ENCODE measurements at regions of chr5 and their contacts with region 1.

Region 1: DNA sequence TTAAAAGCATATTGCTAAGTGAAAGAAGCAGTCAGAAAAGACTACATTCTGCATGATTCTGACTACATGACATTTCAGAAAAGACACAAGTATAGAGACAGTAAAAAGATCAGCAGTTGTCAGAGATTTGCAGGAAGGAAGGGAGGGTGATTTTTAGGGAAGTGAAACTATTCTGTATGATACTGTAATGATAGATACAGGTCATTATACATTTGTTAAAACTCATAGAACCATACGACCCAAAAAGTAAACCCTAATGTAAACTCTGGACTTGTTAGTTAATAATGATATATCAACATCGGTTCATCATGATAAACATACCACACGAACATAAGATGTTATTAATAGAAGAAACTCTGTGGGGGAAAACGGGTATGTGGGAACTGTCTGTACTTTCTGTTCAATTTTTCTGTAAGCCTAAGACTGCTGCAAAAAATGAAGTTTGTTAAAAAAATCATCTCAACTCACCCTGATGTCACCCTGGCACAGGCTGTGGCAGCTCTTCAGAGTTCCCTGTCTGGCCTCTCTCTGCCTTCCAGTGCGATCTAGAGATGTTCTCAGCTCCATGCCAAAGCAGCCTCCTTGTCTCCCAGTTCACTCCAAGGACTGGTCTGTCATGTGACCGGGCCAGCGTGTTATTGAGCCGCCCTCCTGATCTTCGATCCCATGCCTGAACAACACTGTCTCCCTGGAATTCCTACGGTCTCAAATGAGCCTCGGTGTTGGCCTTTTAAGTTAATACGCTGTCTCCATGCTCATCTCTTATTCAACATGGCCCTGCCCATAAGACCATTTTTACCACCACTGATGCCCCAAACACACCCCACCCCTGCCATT is 35.4 kb downstream of the PRLR start:
- DNase-seq: no peak
- H3K4me3 Mint-ChIP-seq: no peak overlapping the region
- H3K27ac Mint-ChIP-seq: no peak overlapping the region
- H3K4me1 Mint-ChIP-seq: no peaks in the 10 kb centered on the region
- H3K27me3 Mint-ChIP-seq: peaks cover 4% of the 10 kb centered on the region

Region 2: GRCh38 chr5:35212122-35212982 is 17.5 kb after region 1 on chr5:
- intact Hi-C with region 1: loop called (anchors 1 kb)
- DNase-seq: no peak
- H3K4me3 Mint-ChIP-seq: no peak overlapping the region
- H3K27ac Mint-ChIP-seq: no peak overlapping the region
- H3K4me1 Mint-ChIP-seq: no peaks in the 10 kb centered on the region
- H3K27me3 Mint-ChIP-seq: peaks cover 8% of the 10 kb centered on the region

Region 3: GRCh38 chr5:36096486-36096885 is 901.6 kb after region 1 on chr5:
- intact Hi-C with region 1: no loop called
- DNase-seq: no peak
- H3K4me3 Mint-ChIP-seq: no peak overlapping the region
- H3K27ac Mint-ChIP-seq: no peak overlapping the region
- H3K4me1 Mint-ChIP-seq: no peaks in the 10 kb centered on the region
- H3K27me3 Mint-ChIP-seq: no peaks in the 10 kb centered on the region

Measured in activated T-helper 1 cell treated with anti-CD3 and anti-CD28 coated beads, Interleukin-12 subunit alpha, Interleukin-12 subunit beta, Interleukin-2, Interleukin-4 antibody, amounts not matched to agents 30 ng/mL and 10 ng/mL and 1 ng/mL, durations not matched to agents 14 hours and 24 hours and 36 hours (primary cell).